Activated B cell treated with CpG ODN at 0.5 μM for 24 hours (primary cell): ENCODE measurements at regions of chr6 and their contacts with region 1.

Region 1: GRCh38 chr6:52419809-52420670 is at the start of gene EFHC1:
- DNase-seq: peak; percentile 97
- ATAC-seq: peak; percentile 90
- H3K4me3 Mint-ChIP-seq: no peak within 1 kb of the TSS
- H3K27ac Mint-ChIP-seq: no peak within 1 kb of the TSS
- H3K4me1 Mint-ChIP-seq: peaks cover 16% of the 10 kb centered on the region
- H3K27me3 Mint-ChIP-seq: no peaks in the 10 kb centered on the region
- CTCF ChIP-seq: no peak
- total RNA-seq, gene EFHC1: 15.8 and 23.2 TPM in 2 replicates

Region 2: GRCh38 chr6:52186480-52186879 is 233.6 kb before region 1 on chr6:
- CTCF ChIA-PET with region 1: no interaction called
- POLR2A ChIA-PET with region 1: no interaction called
- intact Hi-C with region 1: no loop called
- DNase-seq: no peak
- ATAC-seq: no peak
- H3K4me3 Mint-ChIP-seq: no peak overlapping the region
- H3K27ac Mint-ChIP-seq: no peak overlapping the region
- H3K4me1 Mint-ChIP-seq: no peaks in the 10 kb centered on the region
- H3K27me3 Mint-ChIP-seq: peaks cover 9% of the 10 kb centered on the region
- CTCF ChIP-seq: no peak

Region 3: DNA sequence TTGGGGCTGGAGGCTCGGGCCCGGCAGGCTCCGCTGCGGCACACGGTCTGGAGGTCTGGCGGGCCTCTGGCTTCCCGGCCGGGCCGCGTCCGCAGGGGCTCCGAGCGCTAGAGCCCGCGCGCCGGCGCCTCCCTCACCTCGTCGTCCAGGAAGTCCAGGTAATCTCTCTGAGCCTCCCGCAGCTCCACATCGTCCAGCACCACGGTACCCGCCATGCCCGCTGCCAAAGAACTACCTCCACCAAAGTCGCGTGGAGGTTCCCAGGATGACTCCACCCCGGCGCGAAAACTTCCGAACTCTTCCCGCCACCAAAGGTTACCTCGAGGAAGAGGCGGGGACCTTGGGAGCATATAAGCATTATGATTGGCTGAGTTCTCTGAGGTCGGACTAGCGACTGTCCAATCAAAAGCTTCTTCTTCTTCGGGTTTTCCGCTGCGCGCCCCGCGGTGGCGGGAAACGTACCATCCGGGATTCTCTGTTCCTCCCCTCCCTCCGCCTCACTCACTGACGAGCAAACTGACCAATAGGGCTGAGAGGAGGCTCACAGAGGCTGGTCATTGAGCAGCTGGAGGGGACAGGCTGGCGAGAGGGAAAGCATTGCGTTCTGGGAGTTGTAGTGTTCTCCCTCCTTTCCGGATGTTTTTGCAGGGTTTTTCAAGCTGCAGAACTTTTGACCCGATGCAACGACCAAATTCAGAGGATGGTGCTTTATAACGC is 135.4 kb before region 1 on chr6 and contains the start of gene MCM3:
- CTCF ChIA-PET with region 1: interaction called, 18 read pairs
- POLR2A ChIA-PET with region 1: interaction called, 5 read pairs
- intact Hi-C with region 1: loop called (anchors 1 kb)
- DNase-seq: peak; percentile 83
- ATAC-seq: peak; percentile 98
- H3K4me3 Mint-ChIP-seq: peak within 1 kb of the TSS; percentile 58
- H3K27ac Mint-ChIP-seq: no peak within 1 kb of the TSS
- H3K4me1 Mint-ChIP-seq: peaks cover 20% of the 10 kb centered on the region
- H3K27me3 Mint-ChIP-seq: no peaks in the 10 kb centered on the region
- CTCF ChIP-seq: no peak
- total RNA-seq, gene MCM3: 73.2 and 78.9 TPM in 2 replicates

Region 4: GRCh38 chr6:52377538-52378221 is 42.4 kb before region 1 on chr6:
- CTCF ChIA-PET with region 1: no interaction called
- POLR2A ChIA-PET with region 1: no interaction called
- intact Hi-C with region 1: no loop called
- DNase-seq: no peak
- ATAC-seq: no peak
- H3K4me3 Mint-ChIP-seq: peak overlapping the region; percentile 44
- H3K27ac Mint-ChIP-seq: peak overlapping the region; percentile 72
- H3K4me1 Mint-ChIP-seq: peaks cover 30% of the 10 kb centered on the region
- H3K27me3 Mint-ChIP-seq: no peaks in the 10 kb centered on the region
- CTCF ChIP-seq: no peak

Region 5: DNA sequence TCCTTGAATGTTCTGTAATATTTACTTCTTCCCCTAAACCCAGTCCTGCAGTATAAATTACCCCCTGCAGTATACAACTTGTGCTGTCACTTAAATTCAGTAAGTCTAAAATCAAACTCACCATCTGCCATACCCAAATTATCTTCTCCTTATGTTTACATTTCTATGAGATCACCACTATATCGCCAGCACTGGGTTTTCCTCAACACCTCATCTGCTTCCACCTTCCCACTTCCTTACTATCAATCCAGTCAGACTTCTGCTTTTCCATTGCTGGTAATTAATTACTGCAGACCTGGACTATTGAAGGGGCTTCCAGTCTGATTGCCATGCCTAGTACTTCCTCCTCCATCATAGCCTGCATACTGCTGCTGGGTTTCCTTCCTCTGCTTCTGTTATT is 15.3 kb after region 1 on chr6:
- CTCF ChIA-PET with region 1: no interaction called
- POLR2A ChIA-PET with region 1: no interaction called
- intact Hi-C with region 1: no loop called
- DNase-seq: no peak
- ATAC-seq: no peak
- H3K4me3 Mint-ChIP-seq: no peak overlapping the region
- H3K27ac Mint-ChIP-seq: no peak overlapping the region
- H3K4me1 Mint-ChIP-seq: no peaks in the 10 kb centered on the region
- H3K27me3 Mint-ChIP-seq: no peaks in the 10 kb centered on the region
- CTCF ChIP-seq: no peak

Region 6: DNA sequence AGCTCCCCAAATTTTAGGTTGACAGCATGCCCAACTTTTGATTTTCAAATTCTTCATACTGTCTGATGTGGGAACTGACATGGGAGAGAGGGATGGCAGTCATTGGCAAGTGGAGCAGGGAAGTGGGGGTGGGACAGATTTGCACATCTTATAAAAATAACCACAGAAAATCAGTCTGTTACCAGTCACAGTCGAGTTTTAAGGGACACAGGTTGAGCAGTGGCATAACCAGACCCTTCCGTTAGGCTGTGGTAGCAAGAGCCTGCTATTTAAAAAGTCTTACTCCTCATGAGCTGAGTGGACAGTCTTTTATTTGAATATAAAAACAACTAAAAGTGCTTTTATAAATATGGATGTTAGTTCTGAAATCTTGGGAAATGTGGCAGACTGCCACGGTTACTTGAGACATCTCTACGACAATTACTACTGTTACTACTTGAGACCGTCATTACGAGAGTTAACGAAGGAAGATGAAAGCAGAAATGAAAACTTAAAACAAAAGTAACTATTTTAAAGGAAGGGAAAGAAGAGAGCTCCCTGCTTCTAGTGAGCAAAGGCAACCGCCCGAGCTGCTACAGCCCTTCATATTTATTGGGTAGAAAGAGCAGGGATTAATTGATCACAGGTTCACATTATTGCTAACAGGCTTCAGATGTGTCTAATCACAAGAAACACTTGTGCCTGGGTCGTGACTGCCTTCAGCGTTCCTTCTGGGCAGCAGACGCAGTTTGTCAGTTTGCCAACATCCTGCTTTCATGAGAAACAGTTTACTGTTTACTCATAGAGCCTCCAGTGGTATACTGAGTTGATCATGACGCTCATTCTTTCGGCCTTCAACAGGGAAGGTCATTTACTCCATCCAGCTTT is 71.4 kb after region 1 on chr6:
- CTCF ChIA-PET with region 1: interaction called, 4 read pairs
- POLR2A ChIA-PET with region 1: interaction called, 8 read pairs
- intact Hi-C with region 1: loop called (anchors 1 kb)
- DNase-seq: no peak
- ATAC-seq: peak; percentile 57
- H3K4me3 Mint-ChIP-seq: peak overlapping the region; percentile 71
- H3K27ac Mint-ChIP-seq: peak overlapping the region; percentile 86
- H3K4me1 Mint-ChIP-seq: peaks cover 68% of the 10 kb centered on the region
- H3K27me3 Mint-ChIP-seq: no peaks in the 10 kb centered on the region
- CTCF ChIP-seq: no peak

Region 7: GRCh38 chr6:52505726-52506409 is 85.8 kb after region 1 on chr6:
- CTCF ChIA-PET with region 1: interaction called, 14 read pairs
- POLR2A ChIA-PET with region 1: no interaction called
- intact Hi-C with region 1: loop called (anchors 1 kb)
- DNase-seq: no peak
- ATAC-seq: peak; percentile 65
- H3K4me3 Mint-ChIP-seq: no peak overlapping the region
- H3K27ac Mint-ChIP-seq: no peak overlapping the region
- H3K4me1 Mint-ChIP-seq: peaks cover 6% of the 10 kb centered on the region
- H3K27me3 Mint-ChIP-seq: no peaks in the 10 kb centered on the region
- CTCF ChIP-seq: no peak

Region 8: GRCh38 chr6:52598123-52598823 is 178.2 kb after region 1 on chr6:
- CTCF ChIA-PET with region 1: interaction called, 11 read pairs
- POLR2A ChIA-PET with region 1: no interaction called
- intact Hi-C with region 1: loop called (anchors 1 kb)
- DNase-seq: no peak
- ATAC-seq: peak; percentile 58
- H3K4me3 Mint-ChIP-seq: no peak overlapping the region
- H3K27ac Mint-ChIP-seq: no peak overlapping the region
- H3K4me1 Mint-ChIP-seq: peaks cover 20% of the 10 kb centered on the region
- H3K27me3 Mint-ChIP-seq: peaks cover 9% of the 10 kb centered on the region
- CTCF ChIP-seq: no peak

Region 9: DNA sequence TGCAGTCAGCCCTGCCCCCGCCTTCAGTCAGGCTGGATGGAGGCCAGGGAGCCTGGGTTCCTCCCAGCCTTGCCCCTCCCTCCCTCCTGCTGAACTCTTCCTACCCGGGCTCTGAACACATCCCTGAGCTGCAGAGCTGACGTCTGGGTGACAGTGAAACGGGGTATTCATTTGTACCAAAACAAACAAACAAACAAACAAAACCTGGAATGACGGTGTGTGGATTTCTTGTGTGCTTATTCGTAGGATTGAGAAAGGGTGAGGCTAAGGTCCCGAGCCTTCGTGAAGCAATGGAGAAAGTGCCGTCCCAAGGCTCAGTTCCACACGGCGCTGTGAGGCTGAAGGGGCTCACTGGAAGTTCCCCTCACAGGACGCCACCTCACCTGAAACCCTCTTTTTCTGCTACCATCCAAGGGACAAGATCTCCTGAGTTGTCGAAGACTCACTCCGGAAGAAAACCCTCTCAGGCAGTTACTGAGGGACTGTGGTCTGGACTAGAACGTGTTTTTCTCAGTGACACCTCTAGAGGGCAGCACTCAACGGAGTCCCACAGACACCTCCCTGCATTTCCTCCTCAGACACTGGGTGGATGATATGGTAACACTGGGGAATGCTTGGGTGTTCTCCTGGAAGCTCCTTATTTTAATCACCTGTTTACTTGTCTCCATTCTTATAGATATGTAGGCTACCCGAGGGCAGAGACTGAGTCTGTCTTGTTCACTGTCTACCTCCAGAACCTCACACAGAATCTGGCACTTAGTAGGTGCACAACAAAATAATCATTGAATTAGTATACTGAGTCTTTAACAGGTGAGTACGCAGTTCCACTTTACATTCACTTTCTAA is 462.2 kb after region 1 on chr6:
- CTCF ChIA-PET with region 1: no interaction called
- POLR2A ChIA-PET with region 1: no interaction called
- intact Hi-C with region 1: loop called (anchors 5 kb)
- DNase-seq: peak; percentile 31
- ATAC-seq: peak; percentile 98
- H3K4me3 Mint-ChIP-seq: peak overlapping the region; percentile 82
- H3K27ac Mint-ChIP-seq: peak overlapping the region; percentile 20
- H3K4me1 Mint-ChIP-seq: peaks cover 2% of the 10 kb centered on the region
- H3K27me3 Mint-ChIP-seq: no peaks in the 10 kb centered on the region
- CTCF ChIP-seq: peak; percentile 75

Region 10: GRCh38 chr6:53544470-53545308 is 1124.6 kb after region 1 on chr6 and contains the start of gene GCLC:
- CTCF ChIA-PET with region 1: no interaction called
- POLR2A ChIA-PET with region 1: no interaction called
- intact Hi-C with region 1: loop called (anchors 2 kb)
- DNase-seq: peak; percentile 87
- ATAC-seq: peak; percentile 71
- H3K4me3 Mint-ChIP-seq: peak within 1 kb of the TSS; percentile 93
- H3K27ac Mint-ChIP-seq: peak within 1 kb of the TSS; percentile 91
- H3K4me1 Mint-ChIP-seq: peaks cover 67% of the 10 kb centered on the region
- H3K27me3 Mint-ChIP-seq: no peaks in the 10 kb centered on the region
- CTCF ChIP-seq: peak; percentile 37
- total RNA-seq, gene GCLC: 26.6 and 27.1 TPM in 2 replicates